ENCODE measurements at regions of chr6 and their contacts with region 1.

Region 1: DNA sequence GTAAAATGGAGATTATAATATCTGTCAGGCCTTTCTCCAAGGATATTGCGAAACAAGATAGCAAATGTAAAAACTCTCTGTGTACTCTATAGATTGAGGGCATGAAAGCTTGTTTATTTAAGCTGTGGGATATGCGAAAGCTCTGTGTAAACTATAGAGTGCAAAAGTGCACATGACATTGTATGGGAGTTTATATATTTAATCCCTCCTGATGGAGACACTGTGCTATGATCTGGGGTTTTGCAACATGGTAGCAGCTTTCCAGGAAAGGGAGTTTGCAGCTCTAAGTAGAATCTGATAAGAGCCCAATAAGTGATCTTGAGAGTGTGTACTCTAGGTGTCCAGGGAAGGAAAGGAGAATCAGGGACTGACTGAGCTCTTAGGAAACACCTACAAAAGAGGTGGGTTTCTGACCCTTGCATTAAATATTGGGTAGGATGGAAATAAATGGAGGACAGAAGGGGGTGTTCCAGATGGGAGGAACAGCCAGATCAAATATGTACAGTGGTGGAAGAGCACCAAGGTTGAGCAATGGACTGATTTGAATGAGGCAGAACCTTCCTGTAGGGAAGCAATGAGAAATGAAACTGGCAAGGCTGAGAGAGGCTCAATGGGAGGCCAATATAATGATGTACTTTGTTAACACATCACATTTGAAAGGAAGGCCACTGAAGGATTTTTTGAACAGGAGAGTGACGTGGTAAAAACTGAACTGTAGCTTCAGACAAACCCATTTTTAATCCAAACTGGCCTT is 450.1 kb downstream of the GJA1 start:
- DNase-seq: peak; percentile 68 to 76
- H3K4me3 ChIP-seq: no peak overlapping the region
- H3K4me3 Mint-ChIP-seq: peak overlapping the region; percentile 21
- H3K27ac Mint-ChIP-seq: no peak overlapping the region
- H3K4me1 ChIP-seq: peaks cover 25% of the 10 kb centered on the region
- H3K4me1 Mint-ChIP-seq: peaks cover 13% of the 10 kb centered on the region
- H3K27me3 ChIP-seq: no peaks in the 10 kb centered on the region; the same call in 1 of the 2 replicates
- H3K27me3 Mint-ChIP-seq: no peaks in the 10 kb centered on the region
- CTCF ChIP-seq: no peak

Region 2: DNA sequence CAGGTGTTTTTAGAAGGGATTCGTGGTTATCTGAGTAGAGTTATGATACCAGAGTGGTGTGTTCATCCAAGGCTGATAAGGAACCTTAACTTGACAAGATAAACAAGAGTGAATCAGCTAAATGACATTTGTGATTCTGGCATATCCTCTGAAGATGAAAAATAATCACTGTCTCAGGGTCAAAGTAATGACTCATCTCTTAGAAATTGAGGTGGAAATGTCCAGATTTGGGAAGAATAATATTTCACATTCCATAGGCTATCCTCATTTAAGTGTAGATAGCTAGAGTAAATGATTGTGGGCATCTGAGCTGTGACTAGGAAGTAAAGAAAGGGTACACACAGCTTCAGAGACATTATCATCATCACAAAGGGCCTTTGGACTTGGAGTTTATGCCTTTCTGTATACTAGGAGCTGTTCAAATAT is 194.4 kb before region 1 on chr6:
- CTCF ChIA-PET with region 1: no interaction called
- POLR2A ChIA-PET with region 1: no interaction called
- intact Hi-C with region 1: loop called (anchors 1 kb)
- DNase-seq: peak in 1 of 2 experiments; percentile 35
- H3K4me3 ChIP-seq: no peak overlapping the region
- H3K4me3 Mint-ChIP-seq: peak overlapping the region; percentile 30
- H3K27ac Mint-ChIP-seq: peak overlapping the region; percentile 79
- H3K4me1 ChIP-seq: peaks cover 41% of the 10 kb centered on the region
- H3K4me1 Mint-ChIP-seq: peaks cover 38% of the 10 kb centered on the region
- H3K27me3 ChIP-seq: no peaks in the 10 kb centered on the region
- H3K27me3 Mint-ChIP-seq: no peaks in the 10 kb centered on the region
- CTCF ChIP-seq: no peak

Region 3: GRCh38 chr6:121856296-121856695 is 29.3 kb before region 1 on chr6:
- CTCF ChIA-PET with region 1: no interaction called
- POLR2A ChIA-PET with region 1: no interaction called
- intact Hi-C with region 1: loop called (anchors 1 kb)
- DNase-seq: no peak
- H3K4me3 ChIP-seq: no peak overlapping the region
- H3K4me3 Mint-ChIP-seq: no peak overlapping the region
- H3K27ac Mint-ChIP-seq: no peak overlapping the region
- H3K4me1 ChIP-seq: peaks cover 28% of the 10 kb centered on the region
- H3K4me1 Mint-ChIP-seq: peaks cover 38% of the 10 kb centered on the region
- H3K27me3 ChIP-seq: no peaks in the 10 kb centered on the region
- H3K27me3 Mint-ChIP-seq: no peaks in the 10 kb centered on the region
- CTCF ChIP-seq: no peak

Region 4: DNA sequence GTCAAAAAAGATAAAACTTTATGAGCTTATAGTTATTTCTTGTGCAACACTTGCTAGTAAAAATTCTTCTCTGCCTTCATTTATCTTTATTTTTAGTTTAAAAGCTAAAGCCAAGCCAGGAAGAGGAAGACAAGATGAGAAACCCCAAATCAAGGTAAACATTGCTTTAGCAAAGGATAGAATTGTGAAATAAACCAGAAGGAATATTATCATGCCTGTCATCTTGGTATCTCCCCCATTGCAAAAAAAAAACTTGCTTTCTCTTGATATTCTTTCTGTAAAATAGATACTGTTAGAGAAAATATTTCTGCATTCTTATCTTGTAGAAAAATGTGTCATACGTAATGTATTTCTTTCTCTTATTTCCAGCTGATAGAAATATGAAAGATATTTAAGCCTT is 17.4 kb before region 1 on chr6:
- CTCF ChIA-PET with region 1: no interaction called
- POLR2A ChIA-PET with region 1: no interaction called
- intact Hi-C with region 1: loop called (anchors 1 kb)
- DNase-seq: no peak
- H3K4me3 ChIP-seq: no peak overlapping the region
- H3K4me3 Mint-ChIP-seq: no peak overlapping the region
- H3K27ac Mint-ChIP-seq: no peak overlapping the region
- H3K4me1 ChIP-seq: peaks cover 34% of the 10 kb centered on the region
- H3K4me1 Mint-ChIP-seq: peaks cover 22% of the 10 kb centered on the region
- H3K27me3 ChIP-seq: no peaks in the 10 kb centered on the region
- H3K27me3 Mint-ChIP-seq: no peaks in the 10 kb centered on the region
- CTCF ChIP-seq: no peak

Region 5: DNA sequence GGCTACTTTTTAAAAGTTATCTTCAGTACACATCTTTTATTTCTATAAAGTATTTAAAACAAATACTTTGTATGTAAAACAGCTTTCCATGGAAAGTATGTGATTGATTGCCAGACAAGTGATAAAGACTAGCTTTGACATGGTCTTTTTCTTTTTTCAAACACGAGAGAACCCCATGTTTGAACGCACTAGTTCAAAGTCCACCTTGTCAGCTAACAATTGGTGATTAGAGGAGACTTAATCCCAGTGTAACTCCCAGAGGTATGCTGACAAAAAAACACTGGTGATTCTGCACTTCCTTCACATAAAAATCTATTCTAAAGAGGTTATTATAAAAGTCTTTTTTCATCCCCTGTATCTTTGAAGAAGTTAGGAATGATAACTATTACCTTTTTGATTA is 12.0 kb before region 1 on chr6:
- CTCF ChIA-PET with region 1: no interaction called
- POLR2A ChIA-PET with region 1: no interaction called
- intact Hi-C with region 1: loop called (anchors 1 kb)
- DNase-seq: peak in 1 of 2 experiments; percentile 50
- H3K4me3 ChIP-seq: no peak overlapping the region
- H3K4me3 Mint-ChIP-seq: no peak overlapping the region
- H3K27ac Mint-ChIP-seq: no peak overlapping the region
- H3K4me1 ChIP-seq: peaks cover 21% of the 10 kb centered on the region
- H3K4me1 Mint-ChIP-seq: peaks cover 8% of the 10 kb centered on the region
- H3K27me3 ChIP-seq: no peaks in the 10 kb centered on the region
- H3K27me3 Mint-ChIP-seq: no peaks in the 10 kb centered on the region
- CTCF ChIP-seq: no peak

Region 6: GRCh38 chr6:122008101-122008999 is 122.8 kb after region 1 on chr6:
- CTCF ChIA-PET with region 1: no interaction called
- POLR2A ChIA-PET with region 1: no interaction called
- intact Hi-C with region 1: no loop called
- DNase-seq: no peak
- H3K4me3 ChIP-seq: no peak overlapping the region
- H3K4me3 Mint-ChIP-seq: no peak overlapping the region
- H3K27ac Mint-ChIP-seq: no peak overlapping the region
- H3K4me1 ChIP-seq: peaks cover 4% of the 10 kb centered on the region; the same call in 1 of the 2 replicates
- H3K4me1 Mint-ChIP-seq: no peaks in the 10 kb centered on the region
- H3K27me3 ChIP-seq: no peaks in the 10 kb centered on the region
- H3K27me3 Mint-ChIP-seq: no peaks in the 10 kb centered on the region
- CTCF ChIP-seq: no peak

Region 7: GRCh38 chr6:122033539-122034181 is 148.1 kb after region 1 on chr6:
- CTCF ChIA-PET with region 1: no interaction called
- POLR2A ChIA-PET with region 1: no interaction called
- intact Hi-C with region 1: loop called (anchors 1 kb)
- DNase-seq: peak in 1 of 2 experiments; percentile 51
- H3K4me3 ChIP-seq: no peak overlapping the region
- H3K4me3 Mint-ChIP-seq: no peak overlapping the region
- H3K27ac Mint-ChIP-seq: no peak overlapping the region
- H3K4me1 ChIP-seq: peaks cover 13% of the 10 kb centered on the region
- H3K4me1 Mint-ChIP-seq: peaks cover 24% of the 10 kb centered on the region
- H3K27me3 ChIP-seq: no peaks in the 10 kb centered on the region
- H3K27me3 Mint-ChIP-seq: no peaks in the 10 kb centered on the region
- CTCF ChIP-seq: peak in 1 of 2 experiments; percentile 32